Activated CD4-positive, alpha-beta memory T cell treated with anti-CD3 and anti-CD28 coated beads for 36 hours (primary cell): ENCODE measurements at regions of chr16 and their contacts with region 1.

Region 1: GRCh38 chr16:81403616-81404373 is 40.8 kb upstream of the CMIP start:
- DNase-seq: peak; percentile 89
- H3K4me3 Mint-ChIP-seq: no peak overlapping the region
- H3K27ac Mint-ChIP-seq: no peak overlapping the region
- H3K4me1 Mint-ChIP-seq: no peaks in the 10 kb centered on the region
- H3K27me3 Mint-ChIP-seq: no peaks in the 10 kb centered on the region

Region 2: DNA sequence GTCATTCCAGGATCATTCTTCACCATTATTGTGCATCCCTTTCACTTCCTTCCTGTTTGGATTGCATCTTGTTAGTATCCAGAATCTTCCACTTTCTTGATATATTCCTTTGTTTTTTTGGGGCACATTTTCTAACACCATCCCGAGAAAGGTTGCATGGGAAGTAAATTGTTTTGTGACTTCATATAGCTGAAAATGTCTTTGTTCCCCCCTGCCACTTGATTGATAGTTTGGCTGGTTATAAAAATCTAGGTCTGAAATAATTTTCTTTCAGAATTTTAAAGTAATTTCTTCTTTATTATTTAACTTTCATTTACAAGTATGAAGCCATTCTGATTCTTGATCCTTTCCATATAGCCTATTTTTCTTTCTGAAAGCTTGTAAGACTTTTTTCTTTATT is 56.4 kb before region 1 on chr16:
- CTCF ChIA-PET with region 1: no interaction called
- POLR2A ChIA-PET with region 1: no interaction called
- intact Hi-C with region 1: no loop called
- DNase-seq: no peak
- H3K4me3 Mint-ChIP-seq: no peak overlapping the region
- H3K27ac Mint-ChIP-seq: no peak overlapping the region
- H3K4me1 Mint-ChIP-seq: no peaks in the 10 kb centered on the region
- H3K27me3 Mint-ChIP-seq: no peaks in the 10 kb centered on the region

Region 3: GRCh38 chr16:81616321-81617055 is 212.7 kb after region 1 on chr16:
- CTCF ChIA-PET with region 1: interaction called, 5 read pairs
- POLR2A ChIA-PET with region 1: no interaction called
- intact Hi-C with region 1: loop called (anchors 2 kb)
- DNase-seq: peak; percentile 91
- H3K4me3 Mint-ChIP-seq: peak overlapping the region; percentile 26
- H3K27ac Mint-ChIP-seq: peak overlapping the region; percentile 92
- H3K4me1 Mint-ChIP-seq: peaks cover 18% of the 10 kb centered on the region
- H3K27me3 Mint-ChIP-seq: no peaks in the 10 kb centered on the region

Region 4: GRCh38 chr16:81696961-81697615 is 293.3 kb after region 1 on chr16:
- CTCF ChIA-PET with region 1: interaction called, 40 read pairs
- POLR2A ChIA-PET with region 1: no interaction called
- intact Hi-C with region 1: loop called (anchors 1 kb)
- DNase-seq: peak; percentile 73
- H3K4me3 Mint-ChIP-seq: no peak overlapping the region
- H3K27ac Mint-ChIP-seq: no peak overlapping the region
- H3K4me1 Mint-ChIP-seq: no peaks in the 10 kb centered on the region
- H3K27me3 Mint-ChIP-seq: no peaks in the 10 kb centered on the region

Region 5: DNA sequence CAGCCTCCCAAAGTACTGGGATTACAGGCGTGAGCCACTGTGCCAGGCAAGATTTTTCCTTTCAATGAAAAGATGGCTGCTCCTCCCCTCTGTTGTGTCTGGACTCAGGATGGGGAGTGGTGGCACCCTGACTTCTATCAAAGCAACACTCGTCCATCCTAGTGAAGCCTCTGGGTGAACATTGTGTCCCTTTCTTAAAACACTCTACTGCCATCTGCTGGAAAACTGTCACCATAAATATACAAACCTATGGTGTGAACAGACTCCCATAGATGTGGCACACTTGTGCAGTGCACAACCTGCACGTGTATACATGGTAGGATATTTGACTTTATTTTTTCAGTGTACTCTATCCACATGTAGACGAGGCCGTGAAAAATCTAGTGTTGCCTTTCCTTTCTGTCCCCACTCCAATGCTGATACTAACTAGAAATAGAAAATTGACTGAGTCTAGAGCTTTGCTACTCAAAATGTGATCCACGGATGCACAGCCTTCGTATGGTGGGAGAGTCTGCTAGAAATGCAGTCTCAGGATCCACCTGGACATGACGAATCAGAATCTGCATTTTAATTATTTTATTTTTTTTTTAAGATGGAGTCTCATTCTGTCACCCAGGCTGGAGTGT is 319.4 kb after region 1 on chr16:
- CTCF ChIA-PET with region 1: interaction called, 44 read pairs
- POLR2A ChIA-PET with region 1: no interaction called
- intact Hi-C with region 1: loop called (anchors 1 kb)
- DNase-seq: peak; percentile 33
- H3K4me3 Mint-ChIP-seq: no peak overlapping the region
- H3K27ac Mint-ChIP-seq: peak overlapping the region; percentile 60
- H3K4me1 Mint-ChIP-seq: peaks cover 13% of the 10 kb centered on the region
- H3K27me3 Mint-ChIP-seq: no peaks in the 10 kb centered on the region

Region 6: GRCh38 chr16:81730090-81731051 is 326.6 kb after region 1 on chr16:
- CTCF ChIA-PET with region 1: interaction called, 11 read pairs
- POLR2A ChIA-PET with region 1: no interaction called
- intact Hi-C with region 1: no loop called
- DNase-seq: peak; percentile 68
- H3K4me3 Mint-ChIP-seq: peak overlapping the region; percentile 71
- H3K27ac Mint-ChIP-seq: peak overlapping the region; percentile 38
- H3K4me1 Mint-ChIP-seq: peaks cover 15% of the 10 kb centered on the region
- H3K27me3 Mint-ChIP-seq: no peaks in the 10 kb centered on the region

Region 7: GRCh38 chr16:81737885-81738786 is 334.3 kb after region 1 on chr16:
- CTCF ChIA-PET with region 1: interaction called, 13 read pairs
- POLR2A ChIA-PET with region 1: no interaction called
- intact Hi-C with region 1: loop called (anchors 1 kb)
- DNase-seq: peak; percentile 93
- H3K4me3 Mint-ChIP-seq: peak overlapping the region; percentile 53
- H3K27ac Mint-ChIP-seq: peak overlapping the region; percentile 7
- H3K4me1 Mint-ChIP-seq: peaks cover 8% of the 10 kb centered on the region
- H3K27me3 Mint-ChIP-seq: no peaks in the 10 kb centered on the region

Region 8: DNA sequence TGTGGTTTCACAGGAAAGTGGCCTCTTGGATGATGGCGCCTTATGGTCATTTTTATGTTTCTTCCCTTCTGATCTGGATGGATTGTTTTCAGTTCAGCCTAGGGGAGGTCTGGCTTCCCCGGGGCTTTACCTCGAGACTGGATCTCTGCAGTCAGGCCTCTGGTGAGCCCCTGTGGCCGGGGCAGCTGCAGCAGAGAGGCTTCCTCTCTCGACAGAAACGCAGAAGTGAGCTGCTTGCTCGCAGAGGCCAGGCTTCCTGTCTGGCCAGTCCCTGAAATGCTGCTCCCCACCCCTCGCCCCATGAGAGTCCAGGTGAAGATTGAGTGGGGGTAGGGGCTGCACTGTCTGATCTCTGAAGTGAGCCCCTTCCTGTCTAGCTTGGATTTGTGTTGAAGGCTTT is 419.3 kb after region 1 on chr16:
- CTCF ChIA-PET with region 1: no interaction called
- POLR2A ChIA-PET with region 1: no interaction called
- intact Hi-C with region 1: no loop called
- DNase-seq: no peak
- H3K4me3 Mint-ChIP-seq: no peak overlapping the region
- H3K27ac Mint-ChIP-seq: no peak overlapping the region
- H3K4me1 Mint-ChIP-seq: peaks cover 1% of the 10 kb centered on the region
- H3K27me3 Mint-ChIP-seq: no peaks in the 10 kb centered on the region